HCT116 (cell line): ENCODE measurements at regions of chr3 and their contacts with region 1.

Region 1: GRCh38 chr3:99394831-99395778 is 243.3 kb upstream of the COL8A1 start:
- DNase-seq: no peak
- ATAC-seq: no peak
- H3K4me3 ChIP-seq: no peak overlapping the region
- H3K27ac ChIP-seq: no peak overlapping the region
- H3K4me1 ChIP-seq: no peaks in the 10 kb centered on the region
- H3K27me3 ChIP-seq: peaks cover 35% of the 10 kb centered on the region
- CTCF ChIP-seq: no peak
- POLR2A ChIP-seq: no peak
- RAD21 ChIP-seq: no peak

Region 2: DNA sequence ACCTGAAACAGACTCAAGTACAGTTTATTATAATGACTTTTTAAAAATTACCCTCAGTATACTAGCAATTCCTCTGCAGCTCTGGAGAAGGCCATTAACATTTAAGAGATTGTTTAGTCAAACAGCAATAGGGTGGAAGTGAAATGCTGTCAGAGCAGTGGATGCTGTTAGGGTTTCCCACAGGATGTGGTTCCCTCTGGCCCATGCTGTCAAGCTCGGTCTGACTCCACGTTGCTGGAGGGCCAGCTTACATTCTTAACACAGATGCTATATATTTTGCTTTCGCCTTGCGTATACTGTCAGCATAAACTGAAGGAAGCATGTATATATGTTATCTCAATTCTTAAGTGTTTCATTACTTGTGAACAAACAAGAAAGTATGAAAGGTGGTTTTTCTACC is 12.2 kb after region 1 on chr3:
- CTCF ChIA-PET with region 1: no interaction called
- POLR2A ChIA-PET with region 1: interaction called, 13 read pairs
- RAD21 ChIA-PET with region 1: no interaction called
- intact Hi-C with region 1: no loop called
- DNase-seq: no peak
- ATAC-seq: no peak
- H3K4me3 ChIP-seq: no peak overlapping the region
- H3K27ac ChIP-seq: no peak overlapping the region
- H3K4me1 ChIP-seq: no peaks in the 10 kb centered on the region
- H3K27me3 ChIP-seq: 0 out of 2 replicates have a peak, but pooled peaks cover 3% of the 10 kb centered on the region
- CTCF ChIP-seq: no peak
- POLR2A ChIP-seq: no peak
- RAD21 ChIP-seq: no peak